K562 (cell line): ENCODE measurements at regions of chr16 and their contacts with region 1.

Region 1: DNA sequence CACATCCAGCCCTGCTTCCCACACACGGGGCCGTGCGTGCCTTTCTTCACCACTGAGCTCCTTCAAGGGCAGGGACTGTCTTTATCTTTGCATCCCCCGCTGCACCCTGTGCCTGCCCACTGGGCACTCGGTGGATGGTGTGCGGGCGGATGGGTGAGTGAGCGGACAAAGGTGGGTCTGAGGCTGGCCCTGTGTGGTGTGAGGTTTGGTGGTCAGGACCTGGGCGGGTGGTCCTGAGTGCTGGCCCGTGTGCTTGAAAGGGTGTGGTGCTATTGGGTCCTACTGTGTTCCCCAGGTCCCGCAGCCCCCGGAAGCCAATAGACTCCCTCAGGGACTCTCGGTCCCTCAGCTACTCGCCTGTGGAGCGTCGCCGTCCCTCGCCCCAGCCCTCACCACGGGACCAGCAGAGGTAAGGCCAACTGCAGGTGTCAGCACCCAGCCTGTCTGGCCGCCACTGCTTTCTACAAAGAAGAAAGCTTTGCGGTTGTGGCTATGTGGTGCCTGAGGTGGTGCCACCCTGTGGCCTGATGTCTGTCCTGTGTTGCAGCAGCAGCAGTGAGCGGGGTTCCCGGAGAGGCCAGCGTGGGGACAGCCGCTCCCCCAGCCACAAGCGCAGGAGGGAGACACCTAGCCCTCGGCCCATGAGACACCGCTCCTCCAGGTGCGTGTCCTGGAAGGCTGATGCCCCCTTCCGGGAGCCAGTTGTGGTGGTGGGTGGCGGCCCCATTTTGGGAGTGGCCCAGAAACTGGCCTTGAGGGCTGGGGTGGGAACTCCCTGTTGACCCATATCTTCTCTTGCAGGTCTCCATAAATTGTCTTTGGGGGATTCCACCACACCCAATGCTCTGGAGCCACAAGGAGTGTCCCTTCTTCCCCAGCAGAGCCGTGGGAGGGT is 6.8 kb downstream of the ELOB start:
- DNase-seq: peak in 3 of 4 experiments; percentile 38 to 69 (median 51)
- ATAC-seq: peak; percentile 55
- H3K4me3 ChIP-seq: no peak overlapping the region
- H3K27ac ChIP-seq: peak overlapping the region; percentile 34; the same call in 2 of the 3 replicates
- H3K4me1 ChIP-seq: peaks cover 15 to 62% of the 10 kb centered on the region in 2 experiments; a peak in 4 of 5 replicates
- H3K27me3 ChIP-seq: no peaks in the 10 kb centered on the region
- CTCF ChIP-seq: peak; percentile 33 to 57 (median 40)
- EP300 ChIP-seq: no peak
- POLR2A ChIP-seq: peak; percentile 49; the same call in 1 of the 2 replicates
- RAD21 ChIP-seq: peak in 1 of 2 experiments; percentile 28; a peak in 2 of 4 replicates

Region 2: GRCh38 chr16:2739625-2740435 is 30.5 kb before region 1 on chr16:
- CTCF ChIA-PET with region 1: no interaction called
- POLR2A ChIA-PET with region 1: interaction called, 10 read pairs
- in situ Hi-C with region 1: no loop called
- intact Hi-C with region 1: no loop called
- DNase-seq: no peak
- ATAC-seq: peak; percentile 11
- H3K4me3 ChIP-seq: no peak overlapping the region
- H3K27ac ChIP-seq: no peak overlapping the region
- H3K4me1 ChIP-seq: peaks cover 7 to 43% of the 10 kb centered on the region in 2 experiments; a peak in 4 of 5 replicates
- H3K27me3 ChIP-seq: no peaks in the 10 kb centered on the region
- CTCF ChIP-seq: no peak
- EP300 ChIP-seq: no peak
- POLR2A ChIP-seq: no peak
- RAD21 ChIP-seq: no peak

Region 3: DNA sequence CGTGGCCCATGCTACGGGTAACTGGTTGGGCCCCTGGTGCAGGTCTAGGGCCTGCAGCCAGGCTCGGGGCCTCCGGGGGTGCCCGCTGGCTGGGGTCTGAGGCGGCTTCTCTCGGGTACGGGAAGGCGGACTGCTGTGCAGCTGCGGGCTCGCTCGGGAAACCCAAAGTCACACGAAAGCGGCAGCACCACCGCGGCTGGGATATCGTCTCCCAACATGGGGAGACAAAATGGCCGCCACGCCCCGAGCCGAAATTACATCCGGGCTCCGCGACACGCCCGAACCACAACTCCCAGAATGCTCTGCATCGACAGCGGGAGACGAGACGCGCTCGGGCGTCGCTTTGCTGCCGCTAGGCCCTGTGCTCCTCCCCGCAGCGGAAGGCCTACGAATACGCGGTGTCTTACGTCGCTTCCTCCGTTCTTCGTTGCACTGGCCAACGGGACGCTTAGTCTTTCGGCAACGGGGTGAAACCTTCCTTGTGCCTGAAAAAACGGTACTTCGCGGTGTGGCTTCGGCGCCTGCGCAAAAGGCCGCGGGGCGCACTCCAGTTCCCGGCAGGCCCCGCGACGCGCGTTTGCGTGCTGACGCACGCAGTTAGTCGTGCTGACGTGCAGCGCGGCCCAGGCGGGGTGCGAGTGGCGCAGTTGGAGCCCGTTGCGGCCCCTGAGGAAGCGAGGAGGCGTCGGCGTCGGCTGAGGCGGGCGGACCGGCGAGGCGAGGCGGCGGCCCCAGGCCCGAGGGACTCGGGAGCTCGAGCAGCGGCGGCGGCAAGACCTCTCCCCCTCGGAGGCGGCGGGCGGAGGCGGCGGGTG is 18.1 kb before region 1 on chr16 and contains the start of gene SRRM2:
- CTCF ChIA-PET with region 1: no interaction called
- POLR2A ChIA-PET with region 1: interaction called, 96 read pairs
- in situ Hi-C with region 1: no loop called
- intact Hi-C with region 1: no loop called
- DNase-seq: peak; percentile 82 to 97 (median 88)
- ATAC-seq: peak; percentile 90
- H3K4me3 ChIP-seq: peak within 1 kb of the TSS; percentile 79
- H3K27ac ChIP-seq: peak within 1 kb of the TSS; percentile 100
- H3K4me1 ChIP-seq: peaks cover 21 to 25% of the 10 kb centered on the region in 2 experiments
- H3K27me3 ChIP-seq: no peaks in the 10 kb centered on the region
- CTCF ChIP-seq: peak in 1 of 3 experiments; percentile 4; a peak in 2 of 6 replicates
- EP300 ChIP-seq: no peak
- POLR2A ChIP-seq: peak; percentile 94
- RAD21 ChIP-seq: no peak
- polyA plus RNA-seq, gene SRRM2: 26.7 to 27.6 TPM

Region 4: GRCh38 chr16:2782583-2783351 is 12.5 kb after region 1 on chr16:
- CTCF ChIA-PET with region 1: no interaction called
- POLR2A ChIA-PET with region 1: interaction called, 28 read pairs
- in situ Hi-C with region 1: no loop called
- intact Hi-C with region 1: no loop called
- DNase-seq: no peak
- ATAC-seq: no peak
- H3K4me3 ChIP-seq: no peak overlapping the region
- H3K27ac ChIP-seq: no peak overlapping the region
- H3K4me1 ChIP-seq: peaks cover 4 to 47% of the 10 kb centered on the region in 2 experiments; a peak in 4 of 5 replicates
- H3K27me3 ChIP-seq: peaks cover 0 to 3% of the 10 kb centered on the region in 2 experiments; a peak in 2 of 5 replicates
- CTCF ChIP-seq: no peak
- EP300 ChIP-seq: no peak
- POLR2A ChIP-seq: no peak
- RAD21 ChIP-seq: no peak

Region 5: GRCh38 chr16:3400779-3401688 is 630.7 kb after region 1 on chr16 and contains the starts of genes ZNF174 and ZSCAN32:
- CTCF ChIA-PET with region 1: no interaction called
- POLR2A ChIA-PET with region 1: no interaction called
- in situ Hi-C with region 1: no loop called
- intact Hi-C with region 1: no loop called
- DNase-seq: peak; percentile 98 to 100 (median 98)
- ATAC-seq: peak; percentile 99
- H3K4me3 ChIP-seq: peak within 1 kb of the TSS; percentile 89
- H3K27ac ChIP-seq: peak within 1 kb of the TSS; percentile 81
- H3K4me1 ChIP-seq: peaks cover 2 to 16% of the 10 kb centered on the region in 2 experiments; a peak in 4 of 5 replicates
- H3K27me3 ChIP-seq: no peaks in the 10 kb centered on the region
- CTCF ChIP-seq: no peak
- EP300 ChIP-seq: 0 out of 2 replicates have a peak, but pooled peaks have one; percentile 3
- POLR2A ChIP-seq: peak; percentile 86
- RAD21 ChIP-seq: peak in 1 of 2 experiments; percentile 19; a peak in 2 of 4 replicates
- polyA plus RNA-seq, gene ZNF174: 5.1 to 8.3 TPM
- polyA plus RNA-seq, gene ZSCAN32: 16.0 to 24.6 TPM